Astrocyte of the cerebellum (primary cell): ENCODE measurements at regions of chr4 and their contacts with region 1.

Region 1: DNA sequence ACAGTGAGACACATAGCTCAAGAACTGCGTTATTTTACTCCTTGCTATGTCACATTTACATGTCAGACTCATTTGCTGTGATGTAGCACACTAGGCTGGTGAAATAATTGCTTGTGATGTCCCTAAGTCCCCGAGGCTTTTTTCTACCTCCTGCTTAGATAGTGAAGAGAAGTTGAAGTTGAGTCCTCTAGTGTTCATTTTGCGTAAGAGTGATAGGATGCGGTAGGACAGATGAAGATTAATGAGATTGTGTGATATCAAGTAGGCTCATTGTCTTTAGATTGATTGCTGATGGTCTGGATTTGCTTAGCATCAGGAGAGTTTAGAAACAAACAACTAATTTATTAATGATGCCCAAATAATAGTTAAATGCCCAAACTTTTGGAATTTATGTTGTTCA is 173.6 kb upstream of the NUDT6 start:
- DNase-seq: no peak
- H3K4me3 ChIP-seq: no peak overlapping the region
- CTCF ChIP-seq: peak; percentile 15

Region 2: GRCh38 chr4:123133397-123134050 is 37.5 kb after region 1 on chr4:
- in situ Hi-C with region 1: no loop called
- DNase-seq: no peak
- H3K4me3 ChIP-seq: no peak overlapping the region
- CTCF ChIP-seq: no peak

Region 3: GRCh38 chr4:123340381-123340701 is 244.3 kb after region 1 on chr4:
- in situ Hi-C with region 1: no loop called
- DNase-seq: peak; percentile 70
- H3K4me3 ChIP-seq: no peak overlapping the region
- CTCF ChIP-seq: no peak

Region 4: DNA sequence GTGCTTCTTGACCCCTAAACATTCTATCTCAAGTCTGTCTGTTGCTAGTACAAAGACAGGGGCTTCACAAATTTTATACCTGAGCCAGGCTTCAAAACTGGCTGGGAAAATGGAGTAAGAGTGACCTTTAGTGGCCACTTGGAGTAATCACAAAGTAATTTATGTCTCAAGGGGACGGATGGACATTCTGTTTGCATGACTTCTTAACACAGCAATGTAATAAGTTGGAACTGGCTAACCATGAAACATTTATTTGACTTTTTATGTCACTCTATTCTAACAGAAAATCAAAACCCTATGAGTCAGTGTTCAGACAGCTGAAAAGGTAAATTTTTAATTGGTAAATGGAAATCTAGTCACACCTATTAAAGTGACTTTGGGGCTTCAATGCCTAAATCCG is 1015.9 kb after region 1 on chr4:
- in situ Hi-C with region 1: loop called (anchors 25 kb)
- DNase-seq: peak; percentile 86
- H3K4me3 ChIP-seq: no peak overlapping the region
- CTCF ChIP-seq: peak; percentile 63